Left cardiac atrium (tissue), 4 donors: ENCODE measurements at regions of chr3 and their contacts with region 1.

Region 1: DNA sequence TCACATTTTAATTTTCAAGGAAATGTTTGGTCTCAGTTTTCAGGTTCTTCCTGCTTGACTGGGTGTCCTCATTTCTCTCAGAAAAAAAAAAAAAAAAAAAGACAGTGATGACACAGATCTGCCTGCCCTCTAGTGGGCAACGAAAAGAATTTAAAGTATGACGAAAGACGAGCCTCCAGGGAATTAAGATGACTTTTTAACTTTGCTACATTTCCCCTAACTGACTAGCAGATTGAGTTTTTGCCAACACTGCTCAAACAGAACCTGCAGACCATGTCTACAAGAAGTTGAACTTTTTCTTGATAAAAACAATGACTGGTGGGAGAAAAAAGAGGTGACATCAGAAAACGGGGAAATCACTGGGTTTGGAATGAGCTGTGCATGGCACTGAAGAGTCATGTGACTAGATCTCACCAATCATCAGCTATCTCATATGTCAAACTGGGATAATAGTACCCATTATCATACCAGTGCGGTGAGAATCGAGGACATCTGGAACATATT is 40.8 kb downstream of the EOMES start:
- DNase-seq: no peak
- ATAC-seq: peak; percentile 55 to 58

Region 2: GRCh38 chr3:27484015-27484844 is 197.1 kb before region 1 on chr3 and contains the start of gene SLC4A7:
- intact Hi-C with region 1: loop called in 1 of 2 experiments (anchors 10 kb)
- DNase-seq: peak; percentile 98
- ATAC-seq: peak; percentile 97 to 98
- total RNA-seq, gene SLC4A7: 17.1 to 23.7 TPM

Region 3: GRCh38 chr3:27699067-27699466 is 17.8 kb after region 1 on chr3:
- intact Hi-C with region 1: no loop called
- DNase-seq: no peak
- ATAC-seq: no peak

Region 4: DNA sequence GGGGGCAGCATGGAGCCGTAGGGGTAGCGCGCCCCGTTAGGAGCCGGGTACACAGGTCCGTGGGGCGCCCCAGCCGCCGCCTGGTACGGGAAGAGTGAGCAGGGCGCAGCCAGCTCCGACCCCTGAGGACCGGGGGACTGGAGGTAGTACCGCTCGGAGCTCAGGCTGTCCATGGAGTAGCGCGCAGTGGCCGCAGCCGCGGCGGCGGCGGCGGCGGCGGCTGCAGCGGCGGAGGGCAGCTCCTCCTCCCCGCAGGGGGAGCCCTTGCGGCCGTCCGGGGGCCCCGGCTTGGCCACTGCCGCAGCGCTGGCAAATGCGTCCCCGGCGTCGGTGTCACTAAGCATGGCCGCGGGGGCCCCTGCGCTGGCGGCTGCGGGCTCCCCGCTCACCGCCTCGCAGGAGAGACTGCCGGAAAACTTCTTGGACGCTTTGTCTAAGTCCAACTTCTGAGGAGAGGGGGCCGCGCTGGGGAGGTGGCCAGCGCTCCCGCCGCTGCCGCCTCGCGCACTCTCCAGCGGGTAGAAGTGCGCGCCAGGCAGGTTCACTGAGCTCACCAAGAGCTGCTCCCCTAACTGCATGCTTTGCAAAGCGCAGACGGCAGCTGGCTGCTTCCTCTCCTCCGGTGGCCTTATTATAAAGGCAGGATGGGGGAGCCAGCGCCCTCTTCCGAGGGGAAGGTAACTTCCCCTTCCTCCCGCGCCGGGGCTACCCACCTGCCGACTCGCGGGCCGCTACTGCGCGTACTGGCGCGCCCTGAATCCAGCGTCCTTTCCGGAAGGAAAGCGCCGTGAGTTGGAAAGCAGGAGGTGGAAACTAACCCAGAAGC is 40.6 kb after region 1 on chr3 and contains the start of gene EOMES:
- intact Hi-C with region 1: no loop called
- DNase-seq: no peak
- ATAC-seq: peak; percentile 69 to 71
- total RNA-seq, gene EOMES: 0.39 to 0.74 TPM